GM10248 (cell line): ENCODE measurements at regions of chr17 and their contacts with region 1.

Region 1: DNA sequence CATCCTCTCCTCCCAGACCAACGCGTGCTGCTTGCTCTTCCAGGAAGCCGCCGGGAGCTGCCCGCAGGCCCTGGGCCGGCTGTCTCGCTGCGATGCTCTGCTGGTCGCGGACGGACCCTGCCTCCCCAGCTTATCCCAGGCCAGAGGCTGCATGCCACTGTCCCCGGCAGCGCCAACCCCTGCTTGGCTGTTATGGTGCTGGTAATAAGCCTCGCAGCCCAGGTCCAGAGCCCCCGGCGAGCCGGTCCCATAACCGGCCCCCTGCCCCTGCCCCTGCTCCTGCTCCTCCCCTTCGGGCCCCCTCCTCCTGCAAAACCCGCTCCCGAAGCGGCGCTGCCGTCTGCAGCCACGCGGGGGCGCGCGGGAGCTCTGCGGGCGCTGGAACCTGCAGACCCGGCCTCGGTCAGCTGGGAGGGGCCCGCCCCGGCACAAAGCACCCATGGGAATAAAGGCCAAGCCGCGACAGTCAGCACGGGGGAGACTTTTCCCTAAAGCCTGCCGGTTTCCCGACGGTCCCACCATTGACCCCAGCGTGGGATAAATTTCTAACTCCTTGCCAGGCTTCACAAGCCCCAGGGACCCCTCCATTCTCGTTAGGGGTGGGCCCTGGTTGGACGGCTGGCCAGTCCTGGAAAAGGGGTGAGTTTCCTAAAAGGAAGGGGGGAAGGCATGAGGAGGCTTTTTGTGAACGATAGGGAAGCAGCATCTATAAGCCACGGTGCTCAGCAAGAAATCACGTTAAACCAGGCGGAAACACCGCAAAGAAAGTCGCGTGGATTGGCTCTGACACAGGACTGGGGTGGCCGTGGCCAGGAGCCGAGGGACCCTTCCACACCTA is 11.2 kb downstream of the ENPP7 start:
- DNase-seq: peak; percentile 85
- CTCF ChIP-seq: peak; percentile 99

Region 2: DNA sequence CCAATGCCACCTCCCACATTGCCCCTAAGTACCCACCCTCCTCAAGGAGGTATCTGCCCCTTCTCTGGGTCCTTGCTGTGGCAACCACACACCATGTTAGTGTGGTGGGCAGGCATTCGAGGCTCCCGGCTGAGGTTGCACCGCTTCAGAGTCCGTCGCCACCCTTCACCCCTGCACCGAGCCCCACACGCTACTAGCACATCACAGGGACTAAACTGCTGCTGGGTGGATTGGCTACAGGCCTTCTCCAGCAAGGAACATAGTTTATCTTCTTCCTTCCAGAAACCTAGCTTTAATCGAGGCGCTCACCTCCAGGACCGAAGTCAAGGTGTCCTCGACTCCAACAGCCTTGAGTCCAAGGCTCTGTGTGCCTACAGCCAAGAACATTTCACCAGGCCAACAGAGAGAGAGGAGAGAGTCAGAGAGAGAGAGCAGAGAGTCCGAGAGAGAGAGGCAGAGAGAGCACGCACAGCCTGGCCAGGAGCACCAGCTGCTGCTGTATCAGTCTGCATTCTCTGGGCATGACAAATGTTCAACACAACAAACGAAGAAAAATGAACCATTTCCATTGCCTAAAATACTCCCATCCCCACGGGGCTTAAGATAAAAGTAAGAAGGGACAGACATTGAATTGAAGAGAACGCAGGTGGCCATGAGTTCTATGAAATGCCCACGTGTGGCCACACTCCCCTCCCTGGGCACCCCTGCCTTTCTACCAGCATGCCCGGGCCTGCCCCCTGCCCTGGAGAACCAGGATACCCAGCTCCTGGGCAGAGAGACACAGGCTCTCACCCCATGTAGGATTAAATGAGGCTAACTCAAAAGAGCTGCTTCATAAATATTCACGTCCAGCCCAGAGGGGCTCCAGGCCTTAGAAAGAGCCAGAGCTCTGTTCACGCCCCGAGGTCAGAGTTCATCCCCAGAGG is 226.1 kb before region 1 on chr17:
- CTCF ChIA-PET with region 1: no interaction called
- POLR2A ChIA-PET with region 1: no interaction called
- DNase-seq: no peak
- CTCF ChIP-seq: no peak

Region 3: DNA sequence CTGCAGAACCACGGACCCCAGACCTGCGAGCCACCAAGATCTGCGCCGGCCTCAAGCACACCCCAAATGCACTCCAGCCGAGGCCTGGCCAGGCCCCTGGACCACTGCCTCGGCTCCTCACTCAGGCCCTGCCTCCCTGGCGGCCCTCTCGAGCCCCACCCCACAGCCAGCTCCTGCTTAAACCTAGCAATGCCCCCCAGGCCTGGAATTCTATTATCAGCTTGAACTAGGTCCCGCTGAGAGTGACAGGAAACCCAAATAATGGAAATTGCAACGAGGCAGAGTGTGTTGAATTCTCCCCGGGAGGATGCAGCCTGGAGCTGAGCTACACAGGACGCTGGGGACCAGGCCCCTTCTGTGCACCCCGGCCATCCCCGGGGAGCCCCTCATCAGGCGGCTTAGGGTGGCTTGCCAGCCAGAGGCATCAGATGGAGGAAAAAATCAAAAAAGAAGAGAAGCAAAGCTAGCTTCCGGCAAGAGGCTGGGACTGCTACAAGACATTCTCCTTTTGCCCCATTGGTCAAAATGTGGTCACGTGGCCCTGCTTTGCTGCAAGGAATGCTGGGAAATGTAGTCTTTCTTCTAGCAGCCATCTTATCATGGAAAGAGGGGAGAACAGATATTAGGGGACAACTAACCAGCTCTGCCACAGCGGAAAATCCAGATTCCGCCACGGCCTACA is 13.6 kb before region 1 on chr17:
- CTCF ChIA-PET with region 1: interaction called, 21 read pairs
- POLR2A ChIA-PET with region 1: no interaction called
- DNase-seq: peak; percentile 93
- CTCF ChIP-seq: no peak

Region 4: DNA sequence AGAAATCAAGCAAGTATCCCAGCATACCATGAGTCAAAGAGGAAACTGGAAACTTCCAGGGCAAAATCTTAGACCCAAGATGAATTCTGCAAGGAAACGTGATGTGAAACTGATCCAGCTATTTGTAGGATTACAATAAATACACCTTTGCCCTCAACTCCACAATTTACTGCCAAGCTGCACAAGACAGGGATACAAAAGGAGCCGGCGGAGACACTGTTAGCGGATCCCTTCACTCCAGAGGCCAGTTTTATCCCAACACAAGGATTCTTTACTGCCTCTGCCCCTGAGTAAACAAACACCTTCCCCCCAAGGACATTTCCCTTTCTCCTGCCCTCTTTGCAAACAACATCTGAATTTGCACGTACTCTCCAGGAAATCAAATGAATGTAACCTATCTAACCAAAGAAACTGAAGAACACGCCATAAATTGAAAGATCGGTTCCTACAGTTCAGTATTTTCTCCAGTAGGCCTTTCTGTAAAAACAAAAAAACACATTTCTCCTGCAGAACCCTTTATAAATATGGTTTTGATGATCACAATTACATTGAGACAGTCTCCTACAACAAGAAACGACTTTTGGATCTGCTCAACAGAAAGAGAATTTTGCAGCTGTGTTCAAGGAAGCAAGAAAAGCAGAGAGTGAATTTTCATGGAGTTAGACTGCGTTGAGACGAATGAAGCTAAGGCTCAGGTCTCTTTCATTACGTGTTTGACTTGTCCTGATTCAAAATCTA is 34.6 kb after region 1 on chr17:
- CTCF ChIA-PET with region 1: interaction called, 14 read pairs
- POLR2A ChIA-PET with region 1: no interaction called
- DNase-seq: no peak
- CTCF ChIP-seq: no peak